ENCODE measurements at regions of chr9 and their contacts with region 1.

Region 1: GRCh38 chr9:70413798-70414775 is at the start of gene KLF9:
- DNase-seq: peak; percentile 82 to 97 (median 94)
- H3K4me3 ChIP-seq: peak within 1 kb of the TSS; percentile 63 to 99 (median 93)
- H3K27ac ChIP-seq: peak within 1 kb of the TSS; percentile 72 to 100 (median 99)
- H3K27me3 ChIP-seq: no peaks in the 10 kb centered on the region
- CTCF ChIP-seq: peak in 8 of 56 donors; percentile 4 to 16 (median 10)
- total RNA-seq, gene KLF9: 38.3 to 97.2 (median 59.3) TPM

Region 2: GRCh38 chr9:70389621-70390266 is 24.3 kb before region 1 on chr9:
- intact Hi-C with region 1: loop called in 1 of 2 experiments (anchors 2 kb)
- DNase-seq: peak in 7 of 10 donors; percentile 31 to 79 (median 61)
- H3K4me3 ChIP-seq: no peak overlapping the region
- H3K27ac ChIP-seq: peak overlapping the region in 46 of 59 donors; percentile 1 to 82 (median 56)
- H3K27me3 ChIP-seq: no peaks in the 10 kb centered on the region
- CTCF ChIP-seq: no peak

Measured in dorsolateral prefrontal cortex (tissue), 120 donors.